ENCODE measurements at regions of chr2 and their contacts with region 1.

Region 1: DNA sequence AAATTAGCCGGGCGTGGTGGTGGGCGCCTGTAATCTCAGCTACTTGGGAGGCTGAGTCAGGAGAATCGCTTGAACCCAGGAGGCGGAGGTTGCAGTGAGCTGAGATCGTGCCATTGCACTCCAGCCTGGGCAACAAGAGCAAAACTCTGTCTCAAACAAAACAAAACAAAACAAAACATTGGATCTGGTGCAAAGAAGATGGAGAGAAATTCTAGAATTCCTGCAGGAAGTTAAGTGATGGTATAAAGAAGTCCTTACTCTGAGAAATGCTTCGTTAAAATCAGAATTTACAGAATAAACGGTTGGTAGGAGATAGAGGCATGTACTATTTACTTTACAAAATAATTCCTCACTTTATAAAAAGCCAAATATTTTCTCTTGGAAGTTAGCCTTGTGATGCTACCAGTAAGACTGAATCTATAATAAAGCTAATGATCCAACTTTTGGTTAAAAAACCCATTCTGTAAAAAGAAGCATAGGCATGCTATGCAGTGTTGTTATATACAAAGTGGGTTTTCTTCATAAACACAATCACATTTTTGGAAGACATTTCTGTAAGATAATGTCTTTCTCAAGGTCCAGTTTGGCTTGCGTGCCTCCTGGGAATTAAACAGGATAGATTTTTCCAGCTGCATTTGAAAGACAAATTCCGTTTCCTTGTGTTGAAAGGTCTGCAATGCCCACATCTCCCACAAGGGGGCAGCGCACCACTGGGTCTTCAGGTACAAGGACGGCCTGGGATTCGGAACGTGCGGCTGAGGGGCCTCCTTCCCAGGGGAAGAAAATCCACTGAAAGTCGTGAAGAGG is 35.6 kb upstream of the PNO1 start:
- DNase-seq: peak; percentile 76 to 87
- ATAC-seq: peak; percentile 40 to 52 (median 51)
- H3K4me3 ChIP-seq: no peak overlapping the region
- H3K4me3 Mint-ChIP-seq: peak overlapping the region; percentile 85
- H3K27ac ChIP-seq: no peak overlapping the region
- H3K27ac Mint-ChIP-seq: peak overlapping the region; percentile 92 to 98
- H3K4me1 ChIP-seq: peaks cover 36% of the 10 kb centered on the region
- H3K4me1 Mint-ChIP-seq: peaks cover 39 to 40% of the 10 kb centered on the region in 2 donors
- H3K27me3 ChIP-seq: no peaks in the 10 kb centered on the region
- H3K27me3 Mint-ChIP-seq: no peaks in the 10 kb centered on the region
- CTCF ChIP-seq: peak; percentile 98

Region 2: GRCh38 chr2:67938053-67938452 is 184.0 kb before region 1 on chr2:
- intact Hi-C with region 1: no loop called
- DNase-seq: no peak
- ATAC-seq: no peak
- H3K4me3 ChIP-seq: no peak overlapping the region
- H3K4me3 Mint-ChIP-seq: no peak overlapping the region
- H3K27ac ChIP-seq: no peak overlapping the region
- H3K27ac Mint-ChIP-seq: no peak overlapping the region
- H3K4me1 ChIP-seq: no peaks in the 10 kb centered on the region
- H3K4me1 Mint-ChIP-seq: no peaks in the 10 kb centered on the region
- H3K27me3 ChIP-seq: no peaks in the 10 kb centered on the region
- H3K27me3 Mint-ChIP-seq: peaks cover 11 to 44% of the 10 kb centered on the region in 2 donors
- CTCF ChIP-seq: no peak

Region 3: DNA sequence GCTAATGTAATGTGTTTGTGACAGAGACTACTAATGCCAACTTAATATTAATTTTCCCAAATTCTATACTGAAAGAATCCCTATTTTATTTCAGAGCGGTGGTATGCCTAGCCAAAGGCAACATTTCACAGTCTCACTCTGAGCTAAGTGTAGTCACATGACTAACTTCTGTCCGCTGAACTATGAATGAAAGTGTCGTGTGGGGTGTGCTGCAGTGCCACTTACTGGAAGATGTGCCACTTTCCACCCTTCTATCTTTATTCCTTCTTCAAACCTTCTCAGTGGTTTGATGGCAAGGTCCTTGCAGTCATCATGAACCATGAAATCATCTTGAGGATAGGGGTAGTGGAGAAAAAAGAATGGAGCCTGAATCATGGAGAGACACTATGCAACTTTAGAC is 12.0 kb before region 1 on chr2:
- intact Hi-C with region 1: no loop called
- DNase-seq: no peak
- ATAC-seq: no peak
- H3K4me3 ChIP-seq: no peak overlapping the region
- H3K4me3 Mint-ChIP-seq: no peak overlapping the region
- H3K27ac ChIP-seq: no peak overlapping the region
- H3K27ac Mint-ChIP-seq: no peak overlapping the region
- H3K4me1 ChIP-seq: no peaks in the 10 kb centered on the region
- H3K4me1 Mint-ChIP-seq: no peaks in the 10 kb centered on the region
- H3K27me3 ChIP-seq: no peaks in the 10 kb centered on the region
- H3K27me3 Mint-ChIP-seq: no peaks in the 10 kb centered on the region
- CTCF ChIP-seq: no peak

Region 4: DNA sequence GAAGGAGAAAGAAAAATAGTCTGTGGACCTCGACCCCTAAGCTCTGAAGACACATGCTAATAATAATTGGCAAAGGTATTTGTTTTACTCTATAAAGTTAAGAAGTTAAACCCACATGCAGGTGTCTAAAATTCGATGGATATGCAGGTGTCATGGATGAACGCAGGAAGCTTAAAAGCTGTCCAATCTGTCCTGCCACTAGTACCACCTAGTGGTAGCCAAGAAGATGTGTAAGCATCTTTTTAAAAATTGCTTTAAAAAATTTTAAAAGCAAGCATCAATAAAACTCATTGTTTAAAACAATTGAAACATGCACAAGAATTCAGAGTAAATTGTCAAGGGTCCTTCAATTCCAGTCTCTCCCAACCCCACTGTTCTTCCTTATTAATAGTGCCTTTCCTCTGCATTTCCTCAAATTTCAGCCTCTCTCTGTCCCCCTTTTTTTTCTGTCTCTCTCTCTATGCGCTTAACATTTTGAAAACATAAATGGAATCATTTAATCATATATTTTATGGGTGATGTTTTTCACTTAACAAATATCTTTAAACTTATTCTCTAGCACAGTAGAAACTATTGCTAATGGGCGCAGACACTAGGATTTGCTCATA is 160.8 kb after region 1 on chr2:
- intact Hi-C with region 1: loop called (anchors 2 kb)
- DNase-seq: peak in 1 of 2 donors; percentile 71
- ATAC-seq: peak; percentile 57 to 74 (median 64)
- H3K4me3 ChIP-seq: no peak overlapping the region
- H3K4me3 Mint-ChIP-seq: no peak overlapping the region
- H3K27ac ChIP-seq: no peak overlapping the region
- H3K27ac Mint-ChIP-seq: no peak overlapping the region
- H3K4me1 ChIP-seq: no peaks in the 10 kb centered on the region
- H3K4me1 Mint-ChIP-seq: no peaks in the 10 kb centered on the region
- H3K27me3 ChIP-seq: no peaks in the 10 kb centered on the region
- H3K27me3 Mint-ChIP-seq: peaks cover 9 to 10% of the 10 kb centered on the region in 2 donors
- CTCF ChIP-seq: peak; percentile 71

Measured in natural killer cell (primary cell).